Body of pancreas (tissue), 4 donors: ENCODE measurements at regions of chr7 and their contacts with region 1.

Region 1: DNA sequence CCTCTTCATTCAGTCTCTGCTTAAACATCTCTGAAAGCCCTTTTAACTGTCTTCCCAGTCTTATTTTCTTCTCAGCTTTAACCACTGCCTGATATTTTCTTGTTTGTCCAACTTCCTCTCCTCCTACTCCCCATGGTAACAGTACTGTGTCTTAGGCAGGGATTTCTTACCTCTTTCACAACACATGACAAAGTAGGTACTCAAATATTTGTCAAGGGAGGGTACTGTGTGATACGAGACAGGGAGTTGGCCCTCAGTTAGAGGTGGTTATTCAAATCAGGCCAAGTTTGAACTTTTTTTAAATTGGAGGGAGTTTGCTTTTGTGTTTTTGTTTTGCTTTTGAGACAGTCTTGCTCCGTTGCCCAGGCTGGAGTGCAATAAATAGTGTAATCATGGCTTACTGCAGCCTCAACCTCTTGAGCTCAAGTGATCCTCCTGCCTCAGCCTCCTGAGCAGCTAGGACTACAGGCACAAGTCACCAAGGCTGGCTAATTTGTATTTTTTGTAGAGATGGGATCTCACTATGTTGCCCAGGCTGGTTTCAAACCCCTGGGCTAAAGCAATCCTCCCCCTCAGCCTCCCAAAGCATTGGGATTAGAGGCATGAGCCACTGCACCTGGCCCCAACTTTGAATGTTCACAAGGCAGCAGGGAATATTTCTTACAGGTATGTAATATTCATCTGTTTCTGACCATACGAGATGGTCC is 2.5 kb upstream of the KPNA7 start:
- DNase-seq: peak; percentile 36 to 69 (median 54)
- ATAC-seq: peak; percentile 89
- H3K4me3 ChIP-seq: no peak overlapping the region
- H3K27ac ChIP-seq: peak overlapping the region; percentile 52 to 93 (median 83)
- H3K4me1 ChIP-seq: peaks cover 55% of the 10 kb centered on the region
- H3K27me3 ChIP-seq: no peaks in the 10 kb centered on the region
- CTCF ChIP-seq: no peak
- POLR2A ChIP-seq: no peak

Region 2: DNA sequence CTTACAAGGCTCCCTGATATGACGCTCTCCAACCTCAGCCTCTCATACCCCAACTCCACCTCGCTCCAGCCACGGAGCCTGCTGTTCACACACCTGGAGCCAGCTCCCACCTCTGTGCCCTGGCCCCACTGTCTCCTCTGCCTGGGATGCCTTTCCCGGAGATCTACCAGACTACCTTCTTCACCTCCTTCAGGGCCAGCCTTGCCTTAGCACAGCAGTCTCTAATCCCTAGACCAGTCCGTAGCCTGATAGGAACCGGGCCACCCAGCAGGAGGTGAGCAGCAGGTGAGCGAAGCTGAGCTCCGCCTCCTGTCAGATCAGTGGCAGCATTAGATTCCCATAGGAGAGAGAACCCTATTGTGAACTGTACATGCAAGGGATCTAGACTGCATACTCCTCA is 43.3 kb before region 1 on chr7:
- intact Hi-C with region 1: loop called (anchors 10 kb)
- DNase-seq: peak in 1 of 4 donors; percentile 15
- ATAC-seq: no peak
- H3K4me3 ChIP-seq: no peak overlapping the region
- H3K27ac ChIP-seq: no peak overlapping the region
- H3K4me1 ChIP-seq: peaks cover 18% of the 10 kb centered on the region
- H3K27me3 ChIP-seq: no peaks in the 10 kb centered on the region
- CTCF ChIP-seq: no peak
- POLR2A ChIP-seq: no peak